Mammary epithelial cell (primary cell): ENCODE measurements at regions of chr1 and their contacts with region 1.

Region 1: GRCh38 chr1:39738622-39739366 is at the start of gene PPIE:
- DNase-seq: peak; percentile 80
- H3K4me3 ChIP-seq: peak within 1 kb of the TSS; percentile 90 to 98 (median 95)
- H3K27ac ChIP-seq: peak within 1 kb of the TSS; percentile 57
- H3K4me1 ChIP-seq: peaks cover 21% of the 10 kb centered on the region
- H3K27me3 ChIP-seq: no peaks in the 10 kb centered on the region
- CTCF ChIP-seq: no peak
- total RNA-seq, gene PPIE: 25.0 to 50.4 TPM

Region 2: GRCh38 chr1:39317910-39318633 is 420.7 kb before region 1 on chr1:
- CTCF ChIA-PET with region 1: no interaction called
- dilution Hi-C with region 1: loop called (anchors 10 kb)
- in situ Hi-C with region 1: no loop called
- intact Hi-C with region 1: no loop called
- DNase-seq: no peak
- H3K4me3 ChIP-seq: no peak overlapping the region
- H3K27ac ChIP-seq: no peak overlapping the region
- H3K4me1 ChIP-seq: peaks cover 2% of the 10 kb centered on the region
- H3K27me3 ChIP-seq: no peaks in the 10 kb centered on the region
- CTCF ChIP-seq: no peak

Region 3: DNA sequence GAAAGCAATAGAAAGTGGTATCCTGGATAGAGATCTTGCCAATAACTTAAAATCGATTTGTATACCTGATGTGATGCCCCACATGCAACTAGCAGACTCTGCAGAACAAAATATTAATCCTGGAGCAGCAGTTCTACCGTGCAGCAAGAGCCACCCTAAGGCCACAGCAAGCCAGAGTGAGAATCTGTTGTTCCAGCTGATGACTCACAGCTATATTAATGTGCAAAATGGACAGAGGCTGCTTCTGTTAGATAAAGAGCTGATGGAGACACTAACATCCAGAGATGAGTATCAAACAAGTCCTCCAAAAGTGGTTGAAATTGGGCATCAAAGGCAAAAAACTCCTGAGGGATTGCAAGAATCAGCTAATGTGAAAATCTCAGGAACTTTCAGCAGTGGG is 406.5 kb before region 1 on chr1:
- CTCF ChIA-PET with region 1: no interaction called
- dilution Hi-C with region 1: no loop called
- in situ Hi-C with region 1: no loop called
- intact Hi-C with region 1: no loop called
- DNase-seq: peak; percentile 11
- H3K4me3 ChIP-seq: no peak overlapping the region
- H3K27ac ChIP-seq: no peak overlapping the region
- H3K4me1 ChIP-seq: peaks cover 7% of the 10 kb centered on the region
- H3K27me3 ChIP-seq: no peaks in the 10 kb centered on the region
- CTCF ChIP-seq: no peak

Region 4: DNA sequence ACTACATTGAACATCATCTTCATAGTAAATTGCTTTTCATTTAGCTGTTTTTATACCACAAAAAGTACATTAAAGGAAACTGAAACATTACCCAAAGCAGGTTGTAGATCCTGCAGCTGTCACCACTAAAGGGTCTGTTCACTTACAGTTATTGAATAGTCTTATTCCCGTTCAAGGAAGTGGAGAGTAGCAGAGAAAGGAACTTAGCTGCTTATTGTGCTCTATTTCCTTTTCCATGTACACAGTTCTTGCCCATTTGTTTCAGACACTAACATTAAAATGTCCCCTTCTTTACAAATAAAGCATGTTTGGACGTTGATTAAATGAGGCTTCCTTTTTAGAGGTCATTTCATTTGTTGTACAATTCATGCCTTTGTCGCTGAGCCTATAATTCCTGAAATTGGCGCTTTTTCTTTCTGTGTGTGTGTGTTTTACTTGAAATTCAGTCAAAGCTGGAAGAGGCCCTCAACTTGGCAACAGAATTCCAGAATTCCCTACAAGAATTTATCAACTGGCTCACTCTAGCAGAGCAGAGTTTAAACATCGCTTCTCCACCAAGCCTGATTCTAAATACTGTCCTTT is 291.7 kb before region 1 on chr1:
- CTCF ChIA-PET with region 1: no interaction called
- dilution Hi-C with region 1: loop called (anchors 10 kb)
- in situ Hi-C with region 1: no loop called
- intact Hi-C with region 1: no loop called
- DNase-seq: no peak
- H3K4me3 ChIP-seq: no peak overlapping the region
- H3K27ac ChIP-seq: no peak overlapping the region
- H3K4me1 ChIP-seq: no peaks in the 10 kb centered on the region
- H3K27me3 ChIP-seq: no peaks in the 10 kb centered on the region
- CTCF ChIP-seq: no peak

Region 5: GRCh38 chr1:39672551-39672947 is 66.2 kb before region 1 on chr1:
- CTCF ChIA-PET with region 1: no interaction called
- dilution Hi-C with region 1: loop called (anchors 5 kb)
- in situ Hi-C with region 1: no loop called
- intact Hi-C with region 1: no loop called
- DNase-seq: no peak
- H3K4me3 ChIP-seq: no peak overlapping the region
- H3K27ac ChIP-seq: no peak overlapping the region
- H3K4me1 ChIP-seq: peaks cover 18% of the 10 kb centered on the region
- H3K27me3 ChIP-seq: peaks cover 19% of the 10 kb centered on the region
- CTCF ChIP-seq: peak in 1 of 2 donors; percentile 11